ENCODE measurements at regions of chr3 and their contacts with region 1.

Region 1: GRCh38 chr3:127544192-127544802 is 46.2 kb downstream of the TPRA1 start:
- DNase-seq: peak; percentile 76 to 90
- ATAC-seq: peak; percentile 52

Region 2: GRCh38 chr3:126522363-126522788 is 1021.9 kb before region 1 on chr3:
- intact Hi-C with region 1: loop called in 1 of 2 experiments (anchors 10 kb)
- DNase-seq: peak in 1 of 2 donors; percentile 60
- ATAC-seq: no peak

Region 3: DNA sequence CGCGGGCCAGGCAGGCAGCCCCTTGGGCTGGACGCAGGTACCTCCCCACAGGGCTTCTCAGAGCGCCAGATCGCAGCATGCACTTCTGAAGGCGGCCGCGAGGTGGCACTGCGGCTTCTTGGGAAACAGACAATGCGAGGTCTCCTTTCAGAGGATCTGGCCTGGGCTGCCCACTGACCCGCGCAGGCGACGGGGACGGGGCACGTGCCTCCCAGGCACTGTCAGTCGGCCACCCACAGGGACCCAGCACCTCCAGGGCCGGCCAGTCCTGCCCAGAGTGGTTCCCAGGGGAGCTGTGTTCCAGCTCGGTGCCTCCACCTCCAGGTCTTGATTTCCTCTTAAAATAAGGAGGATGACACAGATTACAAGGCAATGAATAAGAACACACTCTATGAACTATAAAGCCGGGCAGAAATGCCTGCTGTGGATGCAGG is 865.0 kb before region 1 on chr3:
- intact Hi-C with region 1: loop called in 1 of 2 experiments (anchors 5 kb)
- DNase-seq: peak; percentile 60 to 83
- ATAC-seq: peak; percentile 92

Region 4: GRCh38 chr3:127264292-127264691 is 280.0 kb before region 1 on chr3:
- intact Hi-C with region 1: no loop called
- DNase-seq: no peak
- ATAC-seq: no peak

Region 5: DNA sequence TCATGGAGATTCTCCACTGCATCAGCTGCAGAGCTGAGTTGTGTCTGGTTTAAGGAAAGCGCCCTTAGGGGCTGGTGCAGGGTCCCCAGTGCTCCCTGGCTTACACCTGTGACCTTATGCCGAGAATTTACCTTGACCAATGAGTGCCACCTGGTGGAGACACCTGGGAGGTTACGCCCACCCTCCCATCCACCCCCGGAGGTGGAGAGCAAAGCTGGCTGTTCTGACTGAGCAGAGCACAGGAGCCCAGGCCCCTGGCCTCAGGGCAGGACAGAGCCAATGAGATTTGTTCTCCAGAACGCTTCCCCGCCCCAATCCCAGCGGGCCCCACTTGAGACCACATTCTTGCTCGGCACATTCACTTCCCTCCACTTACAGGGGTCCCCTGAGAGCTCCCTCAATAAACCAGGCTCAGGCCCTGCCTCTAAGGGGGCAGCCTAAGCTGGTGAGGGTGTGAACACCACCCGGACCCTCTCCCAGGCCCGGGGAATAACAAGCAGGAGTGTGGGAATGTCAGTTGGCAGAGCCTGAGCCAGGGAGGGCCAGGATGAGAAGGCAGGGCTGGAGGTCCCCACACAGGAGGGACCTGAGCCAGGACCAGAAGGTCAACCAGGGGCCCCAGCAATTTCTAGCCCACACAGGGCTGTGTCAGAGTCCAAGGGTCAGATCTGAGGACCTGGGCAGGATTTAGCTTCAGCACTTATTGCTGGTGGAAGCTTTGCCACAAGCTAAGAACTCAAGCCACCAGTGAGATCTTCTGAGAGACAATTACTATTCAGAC is 70.9 kb before region 1 on chr3:
- intact Hi-C with region 1: no loop called
- DNase-seq: peak in 1 of 2 donors; percentile 14
- ATAC-seq: peak; percentile 48

Measured in left colon (tissue), 2 donors.